ENCODE measurements at regions of chr5 and their contacts with region 1.

Region 1: DNA sequence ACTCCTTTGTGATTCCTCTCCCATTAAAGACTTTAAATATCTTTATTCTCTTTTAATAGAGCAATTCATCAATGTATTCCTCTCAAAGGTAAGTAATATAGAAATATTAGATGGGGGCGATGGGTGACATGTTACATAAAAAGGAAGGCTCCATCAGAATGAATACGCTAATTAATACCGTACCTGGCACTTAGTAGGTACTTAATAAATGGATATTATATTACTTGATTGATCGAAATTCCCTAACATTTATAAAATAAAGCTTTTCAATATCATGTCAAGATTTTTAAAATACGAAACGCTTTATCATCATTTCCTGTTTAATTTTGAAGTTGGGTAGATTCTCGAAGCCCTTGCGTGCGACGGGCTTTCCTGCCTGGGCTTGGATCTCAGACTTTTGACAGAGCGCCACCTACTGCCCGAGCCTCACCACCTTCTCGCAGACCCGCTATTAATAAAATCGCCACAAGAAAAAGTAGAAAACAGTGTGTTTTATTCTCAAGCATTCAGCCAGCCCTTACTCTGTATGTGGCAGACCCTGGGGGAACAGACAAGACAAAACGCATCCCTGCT is 99.4 kb downstream of the C5orf15 start:
- DNase-seq: peak; percentile 81
- ATAC-seq: peak; percentile 56

Region 2: DNA sequence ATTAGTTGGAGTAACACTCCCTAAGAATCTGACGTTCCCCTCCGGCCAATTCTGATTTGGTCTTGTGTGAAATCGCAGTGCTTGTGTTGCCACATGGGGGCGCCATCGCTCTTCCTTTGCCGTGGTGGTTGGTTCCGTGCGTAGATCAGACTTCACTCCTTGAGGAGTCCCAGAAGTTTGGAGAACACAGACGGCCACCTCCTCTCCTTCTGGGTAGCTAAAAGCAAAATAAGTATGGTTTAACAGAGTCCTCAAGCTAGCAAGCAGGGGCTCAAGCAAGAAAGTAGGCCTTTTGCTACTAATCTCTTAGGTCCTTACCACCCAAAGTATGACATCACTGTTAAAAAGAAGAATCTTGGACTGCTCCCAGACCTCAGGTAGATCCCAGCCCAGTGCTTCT is 757.7 kb before region 1 on chr5:
- intact Hi-C with region 1: loop called (anchors 10 kb)
- DNase-seq: peak; percentile 82
- ATAC-seq: peak; percentile 77

Region 3: GRCh38 chr5:133423618-133424282 is 445.3 kb before region 1 on chr5:
- intact Hi-C with region 1: loop called (anchors 5 kb)
- DNase-seq: peak; percentile 83
- ATAC-seq: peak; percentile 77

Region 4: DNA sequence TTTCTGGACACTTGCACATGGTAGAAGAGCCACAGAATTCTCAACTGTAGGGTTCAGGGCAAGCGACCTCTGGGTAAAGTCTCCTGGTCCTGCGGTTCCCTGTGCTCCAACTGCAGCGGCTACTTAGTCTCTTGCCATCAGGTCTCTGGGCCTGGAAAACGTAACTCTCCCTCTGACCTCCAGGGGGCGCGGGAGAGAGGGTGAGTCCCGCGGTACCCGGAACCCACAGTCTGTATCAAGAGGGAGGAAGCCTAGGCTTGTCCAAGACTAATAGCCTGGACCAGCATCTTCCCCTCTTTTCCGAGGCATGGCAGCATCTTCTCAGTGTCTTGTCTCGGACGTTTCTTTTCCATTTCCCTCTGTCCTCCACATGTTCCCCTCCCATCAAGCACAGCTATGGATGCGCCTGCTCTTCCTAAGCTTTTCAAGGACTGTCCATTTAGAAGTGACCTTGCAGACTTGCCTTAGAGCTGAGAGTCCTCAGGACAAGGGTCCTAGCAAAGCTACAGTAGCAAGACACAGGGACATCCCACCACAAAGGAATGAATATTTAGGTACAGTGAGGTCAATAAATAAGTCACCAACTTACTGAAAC is 316.0 kb before region 1 on chr5:
- intact Hi-C with region 1: loop called (anchors 10 kb)
- DNase-seq: no peak
- ATAC-seq: no peak

Region 5: DNA sequence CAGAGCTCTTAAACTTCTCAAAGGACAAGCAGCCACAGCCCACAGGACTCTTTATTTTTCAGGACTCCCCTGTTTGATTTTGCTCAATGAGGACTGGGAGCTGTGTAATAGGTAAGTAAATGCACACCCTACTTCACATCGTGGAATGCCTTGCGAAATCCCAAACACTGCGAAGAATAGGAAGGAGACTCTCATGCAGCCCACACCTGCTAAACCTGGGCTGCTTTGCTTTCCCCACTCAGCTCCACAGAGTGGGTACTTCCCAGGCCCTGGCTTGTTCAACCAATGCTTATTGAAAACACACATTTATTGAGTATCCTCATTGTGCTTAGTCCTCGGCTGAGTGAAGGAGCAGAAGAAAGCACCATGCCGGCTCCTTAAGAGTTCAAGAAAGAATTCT is 153.4 kb before region 1 on chr5:
- intact Hi-C with region 1: no loop called
- DNase-seq: no peak
- ATAC-seq: no peak

Region 6: DNA sequence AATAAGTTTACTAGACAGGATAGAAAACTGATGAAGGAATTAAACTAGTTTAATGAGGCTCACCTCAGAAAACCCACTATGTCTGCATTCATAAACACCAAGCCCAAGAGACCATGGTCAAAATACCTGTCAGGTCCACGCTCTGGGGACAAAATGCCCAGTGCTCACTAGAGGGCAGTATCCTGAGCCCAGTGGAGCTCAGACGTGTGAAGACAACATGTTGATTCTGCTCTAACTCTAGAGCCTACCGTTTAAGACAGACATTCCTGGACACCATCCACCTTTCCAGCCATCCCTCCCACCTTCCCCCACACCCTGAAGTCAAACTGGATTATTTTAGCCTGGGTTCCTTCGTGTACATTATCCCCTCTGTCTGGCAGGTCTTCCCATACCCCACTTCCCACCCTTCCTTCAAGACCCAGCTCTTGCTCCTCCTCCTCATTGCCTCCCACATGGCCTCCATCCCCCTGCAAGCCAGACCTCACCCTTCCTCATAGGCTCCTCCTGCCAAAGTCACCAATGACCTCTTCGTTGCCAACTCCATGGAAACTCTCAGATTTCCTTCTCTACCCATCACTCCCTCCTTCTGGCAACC is 114.4 kb before region 1 on chr5:
- intact Hi-C with region 1: loop called (anchors 2 kb)
- DNase-seq: no peak
- ATAC-seq: no peak

Region 7: DNA sequence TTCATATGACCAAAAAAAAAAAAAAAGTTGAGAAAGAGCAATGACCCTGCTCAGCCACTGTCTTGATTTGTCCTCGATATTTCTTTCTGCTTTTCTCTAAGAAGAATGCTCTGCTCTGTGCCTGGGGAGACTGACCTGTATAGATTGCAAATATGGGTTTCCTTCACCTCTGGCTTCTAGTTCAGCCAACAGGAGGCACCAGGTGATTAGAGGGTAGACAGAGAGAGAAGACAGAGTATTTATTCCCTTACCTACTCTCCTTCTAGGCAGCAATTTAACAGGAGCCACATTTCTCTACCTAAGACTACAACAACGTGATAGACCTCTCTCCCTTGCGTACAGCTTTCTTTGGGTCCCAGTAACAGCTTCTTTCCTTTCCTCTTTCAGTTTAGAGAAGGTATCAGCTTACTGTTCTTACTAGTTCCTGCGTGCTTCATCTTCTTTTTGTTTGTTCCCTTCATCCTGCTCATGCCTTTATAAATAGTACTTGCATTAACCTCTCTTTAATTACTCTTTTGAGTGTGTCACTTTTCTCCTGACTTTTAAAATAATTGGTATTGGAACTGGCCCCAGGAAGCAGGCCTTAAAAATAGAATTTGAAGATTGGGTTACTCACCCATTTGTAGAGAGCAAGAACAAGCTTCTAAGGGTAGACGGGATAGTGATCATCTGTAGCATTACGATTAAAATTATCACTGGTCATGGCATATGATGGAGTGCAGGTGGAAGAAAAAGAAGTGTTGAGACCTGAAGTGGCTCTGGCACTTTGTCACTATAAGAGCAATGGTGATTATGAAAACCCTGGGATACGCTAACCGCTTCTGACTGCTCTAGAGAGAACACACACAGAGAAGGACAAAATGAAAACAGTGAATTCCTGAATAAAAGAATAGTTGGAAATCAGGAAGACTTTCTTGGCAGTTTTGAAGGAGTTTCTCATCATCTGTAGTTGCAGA is 95.5 kb before region 1 on chr5:
- intact Hi-C with region 1: loop called (anchors 1 kb)
- DNase-seq: no peak
- ATAC-seq: peak; percentile 62

Measured in Right ventricle myocardium inferior (tissue), 1 donor.